Breast epithelium (tissue), 4 donors: ENCODE measurements at regions of chr7 and their contacts with region 1.

Region 1: GRCh38 chr7:22173685-22174573 is 183.0 kb downstream of the RAPGEF5 start:
- DNase-seq: no peak
- H3K4me3 ChIP-seq: no peak overlapping the region
- H3K27ac ChIP-seq: no peak overlapping the region
- H3K4me1 ChIP-seq: no peaks in the 10 kb centered on the region
- H3K27me3 ChIP-seq: no peaks in the 10 kb centered on the region
- CTCF ChIP-seq: no peak
- POLR2A ChIP-seq: no peak

Region 2: GRCh38 chr7:20310963-20311742 is 1862.8 kb before region 1 on chr7:
- intact Hi-C with region 1: loop called (anchors 10 kb)
- DNase-seq: no peak
- H3K4me3 ChIP-seq: no peak overlapping the region
- H3K27ac ChIP-seq: no peak overlapping the region
- H3K4me1 ChIP-seq: no peaks in the 10 kb centered on the region
- H3K27me3 ChIP-seq: no peaks in the 10 kb centered on the region
- CTCF ChIP-seq: peak in 2 of 3 donors; percentile 31 to 42
- POLR2A ChIP-seq: no peak

Region 3: DNA sequence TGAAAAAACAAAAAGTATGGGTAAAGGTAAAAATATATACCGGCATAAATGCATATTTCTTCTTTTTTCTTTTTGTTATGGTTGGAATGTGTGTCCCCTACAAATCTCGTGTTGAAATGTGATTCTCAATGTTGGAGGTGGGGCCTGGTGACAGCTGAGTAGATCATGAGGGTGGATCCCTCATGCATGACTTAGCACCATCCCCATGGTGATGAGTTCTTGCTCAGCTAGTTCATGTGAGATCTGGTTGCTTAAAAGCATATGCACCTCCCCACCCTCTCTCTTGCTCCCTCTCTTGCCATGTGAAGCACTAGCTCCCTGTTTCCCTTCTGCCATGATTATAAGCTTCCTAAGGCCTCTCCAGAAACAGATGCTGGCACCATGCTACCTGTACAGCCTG is 746.7 kb after region 1 on chr7:
- intact Hi-C with region 1: no loop called
- DNase-seq: no peak
- H3K4me3 ChIP-seq: no peak overlapping the region
- H3K27ac ChIP-seq: no peak overlapping the region
- H3K4me1 ChIP-seq: no peaks in the 10 kb centered on the region
- H3K27me3 ChIP-seq: no peaks in the 10 kb centered on the region
- CTCF ChIP-seq: no peak
- POLR2A ChIP-seq: no peak